ENCODE measurements at regions of chr3 and their contacts with region 1.

Region 1: DNA sequence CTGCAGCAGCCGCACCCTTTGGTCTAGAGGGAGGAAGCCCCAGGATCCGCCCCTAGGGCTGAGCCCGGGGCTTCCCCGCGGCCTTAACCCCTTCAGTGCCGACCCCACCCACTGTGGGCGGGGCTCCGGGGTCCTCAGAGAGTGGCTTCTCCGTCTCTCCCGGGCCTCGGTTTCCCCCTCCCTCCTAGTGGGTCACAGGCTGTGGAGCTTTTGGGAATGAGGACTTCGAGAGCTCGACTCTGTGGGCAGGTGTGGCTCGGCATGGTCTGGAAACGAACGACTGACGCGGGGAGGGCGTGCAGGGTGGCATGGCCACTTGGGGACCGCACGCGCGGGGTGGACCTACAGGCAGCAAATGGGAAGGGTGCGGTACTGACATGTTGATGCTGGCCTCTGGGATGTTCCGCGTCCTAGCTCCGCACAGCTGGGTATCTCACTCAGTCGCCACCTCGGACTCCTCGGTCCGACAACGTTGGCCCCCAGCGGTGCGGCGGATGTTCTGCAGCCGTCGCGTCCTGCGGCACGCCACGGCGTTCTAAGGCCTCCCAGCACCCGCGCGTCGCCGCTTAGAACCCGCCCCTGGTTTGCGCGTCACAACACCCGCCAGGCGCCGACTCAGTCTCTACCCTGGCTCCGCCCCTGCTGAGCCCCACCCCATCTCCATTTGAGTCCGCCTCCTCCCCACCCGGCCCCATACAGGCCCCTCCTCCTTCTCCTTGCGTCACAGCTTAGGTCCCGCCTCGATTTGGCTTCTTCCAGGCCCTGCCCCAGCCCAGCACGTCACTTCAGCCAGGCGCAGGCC is at the starts of genes HYAL3 and NAA80:
- DNase-seq: peak; percentile 99
- H3K4me3 ChIP-seq: peak within 1 kb of the TSS; percentile 70 to 89 (median 80)
- H3K27ac ChIP-seq: peak within 1 kb of the TSS; percentile 61
- H3K4me1 ChIP-seq: peaks cover 0 to 26% (median 12%) of the 10 kb centered on the region in 4 experiments; a peak in 6 of 7 replicates
- H3K27me3 ChIP-seq: no peaks in the 10 kb centered on the region; a peak in 1 of 7 replicates
- CTCF ChIP-seq: peak in 1 of 3 experiments; percentile 8; a peak in 1 of 4 replicates
- EP300 ChIP-seq: no peak
- POLR2A ChIP-seq: peak in 1 of 2 experiments; percentile 66; a peak in 1 of 3 replicates
- RAD21 ChIP-seq: no peak
- total RNA-seq, gene HYAL3: 3.2 and 4.9 TPM in 2 replicates
- total RNA-seq, gene NAA80: 10.1 and 11.3 TPM in 2 replicates

Region 2: DNA sequence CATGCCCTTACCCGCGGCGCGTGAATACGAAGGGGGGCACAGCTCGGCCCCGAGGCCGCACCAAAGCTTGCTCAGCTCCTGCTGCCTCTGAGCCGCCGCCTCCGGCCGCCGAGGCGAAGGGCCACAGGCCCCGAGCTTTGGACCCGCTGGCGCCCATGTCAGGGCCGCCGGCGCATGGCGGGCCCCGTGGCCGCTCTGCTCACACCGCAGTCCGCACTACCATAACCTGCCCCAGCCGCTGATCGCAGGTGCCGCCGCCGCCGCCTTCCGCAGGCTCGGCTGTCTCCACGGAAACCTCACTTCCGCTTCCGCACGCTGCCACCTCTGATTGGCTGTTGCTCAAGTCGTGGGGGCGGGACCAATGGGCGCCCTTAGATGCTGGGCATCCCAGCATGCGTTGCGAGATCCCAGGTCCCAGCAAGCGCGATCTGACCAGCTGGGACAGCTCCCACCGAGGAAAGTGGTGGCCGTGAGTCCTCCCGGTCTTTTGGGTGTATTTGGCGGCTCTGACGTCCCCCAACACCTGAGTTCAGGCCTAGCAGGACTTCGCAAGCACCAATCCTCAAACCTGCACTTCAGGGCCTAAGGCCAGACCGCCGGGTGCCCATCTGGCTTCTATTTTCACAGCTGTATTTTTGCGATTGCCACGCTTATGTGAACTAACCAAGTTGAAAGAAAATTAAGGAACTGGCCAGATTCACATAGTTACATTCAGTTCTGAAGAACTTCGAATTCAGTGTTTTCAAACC is 29.1 kb after region 1 on chr3 and contains the start of gene TUSC2:
- CTCF ChIA-PET with region 1: interaction called, 24 read pairs
- POLR2A ChIA-PET with region 1: interaction called, 149 read pairs
- DNase-seq: peak; percentile 82 to 96
- H3K4me3 ChIP-seq: peak within 1 kb of the TSS; percentile 52 to 97 (median 90)
- H3K27ac ChIP-seq: peak within 1 kb of the TSS; percentile 49; the same call in 1 of the 2 replicates
- H3K4me1 ChIP-seq: peaks cover 0 to 19% (median 7%) of the 10 kb centered on the region in 4 experiments; a peak in 6 of 7 replicates
- H3K27me3 ChIP-seq: no peaks in the 10 kb centered on the region
- CTCF ChIP-seq: peak in 1 of 3 experiments; percentile 3; a peak in 1 of 4 replicates
- EP300 ChIP-seq: no peak
- POLR2A ChIP-seq: peak in 1 of 2 experiments; percentile 82; a peak in 1 of 3 replicates
- RAD21 ChIP-seq: no peak
- total RNA-seq, gene TUSC2: 30.8 and 33.3 TPM in 2 replicates

Region 3: DNA sequence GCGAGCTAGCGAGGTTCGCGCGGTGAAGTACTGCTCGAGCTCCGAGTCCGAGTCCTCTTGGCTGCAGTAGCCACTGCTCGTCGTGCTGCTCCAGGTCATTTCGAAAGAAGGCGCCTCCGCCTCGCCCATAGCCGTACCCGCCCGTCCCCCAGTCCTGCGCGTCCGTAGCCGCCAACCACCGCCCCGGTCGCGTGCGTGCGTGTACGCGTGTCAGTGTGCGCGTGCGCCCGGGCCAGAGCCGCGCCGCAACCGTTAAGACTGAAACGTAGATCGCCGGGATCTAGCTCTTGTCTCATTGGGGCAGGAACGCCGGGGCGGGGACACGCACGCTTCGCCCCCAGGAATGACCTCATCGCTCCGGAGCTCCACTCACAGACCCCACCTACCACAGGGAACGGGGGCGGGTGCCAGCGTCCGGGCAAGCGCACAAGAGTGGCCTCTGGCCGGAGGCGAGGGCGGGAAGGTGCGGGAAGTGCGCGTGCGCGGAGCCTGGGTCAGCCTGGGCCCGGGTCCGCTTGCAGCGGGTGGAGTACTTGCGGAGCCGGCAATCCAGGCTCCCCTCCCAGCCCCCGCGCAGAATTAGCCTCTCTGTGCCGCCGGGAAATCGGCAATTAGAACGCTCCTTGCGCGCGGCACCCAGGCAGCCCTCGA is 38.3 kb after region 1 on chr3:
- CTCF ChIA-PET with region 1: interaction called, 11 read pairs
- POLR2A ChIA-PET with region 1: interaction called, 3 read pairs
- DNase-seq: peak; percentile 96 to 99
- H3K4me3 ChIP-seq: peak overlapping the region; percentile 72 to 96 (median 88)
- H3K27ac ChIP-seq: peak overlapping the region; percentile 72; the same call in 1 of the 2 replicates
- H3K4me1 ChIP-seq: peaks cover 0 to 15% (median 14%) of the 10 kb centered on the region in 4 experiments; a peak in 5 of 7 replicates
- H3K27me3 ChIP-seq: peaks cover 20 to 44% (median 37%) of the 10 kb centered on the region in 4 experiments
- CTCF ChIP-seq: no peak
- EP300 ChIP-seq: no peak
- POLR2A ChIP-seq: peak in 1 of 2 experiments; percentile 54; a peak in 2 of 3 replicates
- RAD21 ChIP-seq: no peak

Region 4: DNA sequence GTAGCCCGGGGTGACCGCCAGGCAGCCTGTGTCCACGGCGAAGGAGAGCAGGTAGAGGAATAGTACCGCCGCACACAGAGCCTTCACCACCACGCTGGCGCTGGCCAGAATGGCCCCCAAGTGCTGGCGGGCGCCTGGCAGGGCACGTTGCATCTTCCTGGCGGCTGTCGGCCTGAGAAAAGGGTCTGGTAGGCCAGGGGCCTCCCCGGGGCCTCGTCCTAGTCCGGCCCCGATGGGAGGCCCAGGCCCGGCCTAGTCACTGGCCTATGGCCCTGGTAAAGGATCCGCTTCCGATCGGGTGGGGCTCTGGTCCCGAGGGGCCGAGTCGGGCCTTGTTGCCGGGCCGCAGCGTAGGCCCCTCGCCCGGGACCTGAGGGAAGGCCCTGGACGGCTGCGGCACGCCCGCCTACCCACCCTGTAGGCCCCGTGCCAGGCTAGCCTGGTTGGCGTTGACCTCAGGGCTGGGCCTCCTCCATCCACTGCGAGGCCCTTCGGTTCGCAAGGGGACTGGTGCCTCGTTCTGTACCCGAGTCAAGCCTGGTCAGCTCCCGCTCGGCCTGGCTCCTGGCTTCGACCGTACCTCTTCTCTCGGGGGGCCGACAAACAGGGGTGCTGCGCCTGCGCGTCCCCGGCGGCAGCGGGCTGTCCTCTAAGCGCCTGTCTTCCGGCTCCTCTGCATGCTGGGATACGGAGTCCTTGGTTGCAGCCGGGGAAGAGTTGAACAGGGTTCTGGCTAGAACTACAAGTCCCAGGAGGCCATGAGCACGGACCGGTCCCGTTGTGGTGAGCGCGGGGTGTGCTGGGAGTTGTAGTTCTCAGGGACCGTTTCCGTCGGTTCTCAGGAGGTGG is 60.1 kb after region 1 on chr3 and contains the start of gene TMEM115:
- CTCF ChIA-PET with region 1: no interaction called
- POLR2A ChIA-PET with region 1: no interaction called
- DNase-seq: peak; percentile 91 to 98
- H3K4me3 ChIP-seq: peak within 1 kb of the TSS; percentile 75 to 85 (median 83)
- H3K27ac ChIP-seq: peak within 1 kb of the TSS; percentile 46; the same call in 1 of the 2 replicates
- H3K4me1 ChIP-seq: peaks cover 0 to 16% (median 9%) of the 10 kb centered on the region in 4 experiments; a peak in 6 of 7 replicates
- H3K27me3 ChIP-seq: peaks cover 0 to 5% (median under 1%) of the 10 kb centered on the region in 4 experiments; a peak in 3 of 7 replicates
- CTCF ChIP-seq: no peak
- EP300 ChIP-seq: no peak
- POLR2A ChIP-seq: no peak
- RAD21 ChIP-seq: no peak
- total RNA-seq, gene TMEM115: 25.3 and 25.4 TPM in 2 replicates